GM13977 (cell line): ENCODE measurements at regions of chr22 and their contacts with region 1.

Region 1: DNA sequence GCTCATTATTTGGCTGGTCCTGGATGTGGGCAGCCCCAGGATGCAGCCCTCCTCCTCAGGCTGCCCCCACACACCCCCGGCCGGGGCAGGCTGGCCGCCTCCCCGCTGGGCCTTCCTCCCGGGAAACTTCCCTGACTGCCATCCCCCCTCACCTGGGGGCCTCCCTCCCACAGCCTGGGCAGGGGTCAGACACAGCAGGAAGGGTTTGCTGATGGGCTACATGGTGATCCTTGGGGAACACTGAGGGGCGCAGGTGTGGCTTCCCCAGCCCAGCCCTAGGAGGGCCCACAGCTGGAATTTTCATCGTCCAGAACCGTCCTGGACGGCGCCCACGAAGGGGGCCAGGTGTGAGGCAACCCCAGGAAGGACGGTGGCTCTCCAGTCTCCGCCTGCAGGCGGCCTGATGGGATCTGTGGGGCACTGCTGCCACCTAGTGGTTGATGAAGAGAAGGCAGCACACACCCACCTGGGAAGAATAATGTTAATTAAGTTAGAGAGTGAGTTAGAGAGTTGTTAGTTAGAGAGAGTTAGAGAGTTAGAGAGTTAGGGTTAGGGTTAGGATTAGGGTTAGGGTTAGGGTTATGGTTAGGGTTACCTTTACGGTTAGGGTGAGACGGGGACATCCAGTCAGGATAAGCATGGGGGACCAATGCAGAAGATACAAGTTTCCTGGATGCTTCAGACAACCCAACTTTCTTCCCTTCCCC is 75.9 kb upstream of the PRR5 start:
- DNase-seq: peak; percentile 87
- CTCF ChIP-seq: peak; percentile 93

Region 2: DNA sequence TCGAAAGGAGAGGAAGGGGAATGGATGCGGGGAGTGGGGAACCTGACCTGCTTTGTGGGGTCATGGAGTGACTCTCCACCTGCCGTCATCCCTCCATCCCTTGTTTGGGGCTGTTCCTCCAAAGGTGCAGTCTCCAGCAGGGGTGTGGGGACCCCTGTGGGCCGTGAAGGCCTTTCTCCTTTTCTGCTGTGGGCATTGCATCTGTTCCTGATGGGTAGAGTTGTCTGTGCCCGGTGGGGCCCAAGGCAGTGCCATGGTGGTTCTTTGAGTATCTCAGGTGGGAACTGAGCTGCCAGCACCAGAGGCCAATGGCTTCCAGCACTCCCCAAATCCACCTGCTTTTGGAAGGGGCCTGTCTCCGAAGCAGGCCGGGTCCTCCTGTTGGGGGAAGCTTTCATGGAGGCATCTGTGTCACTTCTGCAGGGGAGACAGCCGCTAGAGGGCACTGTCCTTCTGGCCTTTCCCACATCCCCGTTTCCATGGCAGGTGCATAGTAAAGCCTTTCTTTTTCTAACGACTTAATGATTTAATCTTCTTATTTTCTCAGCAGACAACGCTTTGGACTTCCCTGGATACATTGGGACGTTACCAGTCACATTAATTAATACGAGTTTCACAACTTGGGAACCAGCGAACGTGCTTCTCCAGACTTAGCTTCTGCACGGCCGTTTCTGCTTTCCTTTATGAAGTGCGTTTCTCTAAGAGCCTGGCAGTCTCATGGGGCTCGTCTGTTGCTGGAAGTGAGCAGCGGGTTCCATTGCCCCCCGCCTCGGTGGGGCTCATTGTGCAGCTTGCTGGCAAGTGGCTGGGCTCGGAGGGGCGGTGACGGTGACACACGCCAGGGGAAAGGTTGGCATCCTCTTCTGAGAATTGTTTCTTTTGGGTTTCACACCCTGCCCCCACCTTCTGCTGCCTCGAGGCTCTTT is 544.9 kb before region 1 on chr22:
- in situ Hi-C with region 1: loop called (anchors 25 kb)
- DNase-seq: peak; percentile 84
- CTCF ChIP-seq: peak; percentile 84

Region 3: GRCh38 chr22:44486538-44486937 is 139.6 kb before region 1 on chr22:
- in situ Hi-C with region 1: no loop called
- DNase-seq: no peak
- CTCF ChIP-seq: no peak